ENCODE measurements at regions of chr22 and their contacts with region 1.

Region 1: DNA sequence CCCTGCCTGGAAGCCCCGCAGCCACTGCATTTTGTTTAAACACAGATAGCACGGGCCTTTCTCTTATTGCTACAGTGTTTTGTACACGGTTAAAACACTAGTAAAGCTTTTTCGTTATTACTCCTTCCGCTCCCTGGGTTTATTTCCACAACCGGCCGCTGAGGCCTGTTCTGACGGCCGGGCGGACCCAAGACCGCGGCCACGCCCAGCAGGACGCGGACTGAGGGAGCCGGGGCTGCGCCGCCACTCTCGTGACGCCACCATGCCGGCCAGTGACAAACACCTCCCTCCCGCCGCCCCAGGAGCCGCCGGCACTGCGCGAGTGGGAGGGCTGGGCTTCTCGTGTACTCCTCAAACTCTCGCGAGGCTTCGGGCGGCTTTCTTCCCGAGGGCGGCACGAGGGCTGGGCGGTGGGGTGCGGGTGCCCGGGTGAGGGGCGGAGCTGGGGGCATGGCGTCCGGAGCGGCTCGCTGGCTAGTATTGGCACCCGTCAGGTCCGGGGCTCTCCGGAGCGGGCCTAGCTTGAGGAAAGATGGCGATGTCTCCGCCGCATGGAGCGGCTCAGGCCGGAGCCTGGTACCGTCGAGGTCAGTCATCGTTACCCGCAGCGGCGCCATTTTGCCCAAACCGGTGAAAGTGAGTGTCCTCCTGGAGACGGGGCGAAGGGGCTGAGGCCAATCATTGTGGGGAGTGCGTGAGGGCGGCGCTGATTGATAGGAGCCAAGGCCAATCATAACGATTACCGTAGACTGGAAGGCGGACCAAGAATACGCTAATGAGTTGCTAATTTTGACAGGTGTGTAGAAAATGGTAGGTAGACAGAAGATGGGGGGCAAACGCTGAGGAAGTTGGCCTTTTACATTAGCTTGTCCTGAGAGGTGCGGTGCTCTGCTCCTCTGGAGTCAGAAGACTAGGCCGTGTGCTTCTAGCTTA is at the start of gene SMDT1:
- DNase-seq: peak; percentile 100
- H3K4me3 ChIP-seq: peak within 1 kb of the TSS; percentile 61 to 68 (median 63)
- H3K27ac ChIP-seq: peak within 1 kb of the TSS; percentile 93 to 99 (median 98)
- H3K4me1 ChIP-seq: peaks cover 0 to 48% (median 39%) of the 10 kb centered on the region in 4 donors
- H3K27me3 ChIP-seq: no peaks in the 10 kb centered on the region
- CTCF ChIP-seq: no peak
- EP300 ChIP-seq: peak in 1 of 4 donors; percentile 44
- POLR2A ChIP-seq: peak; percentile 93 to 95
- total RNA-seq, gene SMDT1: 12.1 to 23.9 (median 21.9) TPM

Region 2: GRCh38 chr22:41688365-41689211 is 391.0 kb before region 1 on chr22 and contains the start of gene SNU13:
- intact Hi-C with region 1: loop called (anchors 10 kb)
- DNase-seq: peak; percentile 97
- H3K4me3 ChIP-seq: peak within 1 kb of the TSS; percentile 57 to 81 (median 74)
- H3K27ac ChIP-seq: peak within 1 kb of the TSS; percentile 88 to 97 (median 94)
- H3K4me1 ChIP-seq: peaks cover 0 to 24% (median 16%) of the 10 kb centered on the region in 4 donors
- H3K27me3 ChIP-seq: no peaks in the 10 kb centered on the region
- CTCF ChIP-seq: peak in 1 of 4 experiments; percentile 18
- EP300 ChIP-seq: peak in 2 of 4 donors; percentile 9 to 58
- POLR2A ChIP-seq: peak; percentile 68 to 85
- total RNA-seq, gene SNU13: 69.8 to 121 (median 99.0) TPM